ENCODE measurements at regions of chr12 and their contacts with region 1.

Region 1: DNA sequence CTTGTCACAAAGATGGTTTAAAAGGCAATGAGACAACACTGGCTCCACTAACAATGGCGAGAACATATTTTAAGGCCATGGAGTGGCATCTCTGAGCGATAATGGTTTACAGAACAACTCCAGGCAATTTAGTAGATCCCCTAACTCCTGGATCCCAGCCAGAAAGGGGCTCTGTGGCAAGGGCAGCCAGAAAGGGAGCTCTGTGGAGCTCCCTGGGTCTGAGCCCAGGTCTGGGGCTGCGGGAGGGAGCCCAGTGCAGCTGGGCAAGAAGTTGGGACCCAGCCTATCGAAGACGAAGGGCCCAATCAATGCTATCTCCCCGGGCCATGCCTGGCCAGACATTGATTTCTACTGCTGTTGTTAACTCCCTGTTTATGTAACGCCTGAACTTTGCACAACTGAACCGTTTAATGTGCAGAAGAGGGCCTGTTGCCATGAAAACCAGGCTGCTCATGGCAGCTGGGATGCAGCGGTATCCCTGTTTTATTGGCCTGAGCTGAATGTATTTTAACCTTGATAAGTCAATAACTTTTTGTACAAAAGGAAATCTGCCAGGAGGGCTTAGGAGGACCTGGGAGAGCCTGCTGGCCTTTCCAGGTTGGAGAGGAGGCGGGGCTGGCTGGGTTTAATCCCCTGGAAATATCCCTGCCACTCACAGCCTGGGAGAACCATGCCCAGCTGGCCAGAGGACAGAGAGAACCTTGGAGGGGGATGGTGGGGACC is 6.7 kb upstream of the FAM222A start:
- DNase-seq: no peak
- H3K4me3 ChIP-seq: no peak overlapping the region
- CTCF ChIP-seq: no peak
- POLR2A ChIP-seq: no peak

Region 2: GRCh38 chr12:109650808-109651207 is 56.1 kb before region 1 on chr12:
- intact Hi-C with region 1: no loop called
- DNase-seq: no peak
- H3K4me3 ChIP-seq: no peak overlapping the region
- CTCF ChIP-seq: no peak
- POLR2A ChIP-seq: no peak

Region 3: DNA sequence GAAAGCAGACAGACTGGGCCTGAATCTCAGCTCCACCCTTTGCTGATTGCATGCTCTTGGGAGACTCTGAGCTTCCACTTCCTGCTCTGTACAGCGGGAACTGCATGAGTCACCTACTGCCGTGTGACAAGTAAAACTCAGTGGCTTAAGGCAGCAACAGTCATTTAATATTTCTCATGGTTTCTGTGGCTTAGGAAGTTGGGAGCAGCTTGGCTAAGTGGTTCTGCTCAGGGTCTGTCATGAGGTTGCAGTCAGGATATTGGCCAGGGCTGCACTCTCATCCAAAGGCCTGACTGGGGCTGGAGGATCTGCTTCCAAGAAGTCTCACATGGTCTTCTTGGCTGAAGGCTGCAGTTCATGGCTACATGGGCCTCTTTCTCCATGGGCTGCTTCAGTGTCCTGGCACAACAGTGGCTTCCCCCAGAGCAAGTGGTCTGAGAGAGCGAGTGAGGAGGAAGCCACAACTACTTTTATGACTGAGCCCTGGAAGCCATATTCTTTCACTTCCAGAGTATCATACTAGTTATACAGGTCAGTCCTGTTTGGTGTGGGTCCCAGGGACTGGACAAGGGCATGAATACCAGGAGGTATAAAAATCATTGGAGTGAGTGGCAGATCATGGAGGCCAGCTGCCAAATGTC is 56.4 kb after region 1 on chr12:
- intact Hi-C with region 1: no loop called
- DNase-seq: peak in 1 of 2 donors; percentile 66
- H3K4me3 ChIP-seq: no peak overlapping the region
- CTCF ChIP-seq: no peak
- POLR2A ChIP-seq: no peak

Region 4: DNA sequence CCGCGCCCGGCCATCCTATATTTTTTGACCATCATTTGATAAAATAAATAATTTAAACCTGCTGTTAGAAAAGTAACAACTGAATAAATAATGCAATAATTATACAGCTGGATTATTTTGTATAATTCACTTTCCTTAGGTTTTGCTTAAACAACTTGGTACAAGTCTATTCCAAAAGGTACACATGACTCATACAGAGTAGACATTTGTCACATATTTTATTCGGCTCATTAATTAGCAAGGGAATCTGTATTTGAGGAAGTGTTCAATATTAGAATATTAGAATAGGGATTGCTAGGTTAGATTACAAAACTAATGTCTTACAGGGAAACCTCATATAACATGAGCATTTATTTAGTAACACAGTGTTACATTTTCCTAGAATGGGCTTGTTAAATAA is 622.8 kb after region 1 on chr12:
- intact Hi-C with region 1: loop called (anchors 5 kb)
- DNase-seq: no peak
- H3K4me3 ChIP-seq: no peak overlapping the region
- CTCF ChIP-seq: no peak
- POLR2A ChIP-seq: no peak